CD8-positive, alpha-beta T cell (primary cell): ENCODE measurements at regions of chr19 and their contacts with region 1.

Region 1: GRCh38 chr19:35352448-35353304 is 5.0 kb downstream of the FFAR1 start:
- DNase-seq: peak; percentile 28 to 85 (median 66)
- ATAC-seq: peak; percentile 94
- H3K4me3 ChIP-seq: no peak overlapping the region
- H3K4me3 Mint-ChIP-seq: no peak overlapping the region
- H3K27ac ChIP-seq: no peak overlapping the region
- H3K27ac Mint-ChIP-seq: peak overlapping the region; percentile 22
- H3K4me1 ChIP-seq: peaks cover 13% of the 10 kb centered on the region
- H3K4me1 Mint-ChIP-seq: peaks cover 9% of the 10 kb centered on the region
- H3K27me3 ChIP-seq: no peaks in the 10 kb centered on the region
- H3K27me3 Mint-ChIP-seq: peaks cover 8% of the 10 kb centered on the region
- CTCF ChIP-seq: peak; percentile 90

Region 2: GRCh38 chr19:35375505-35376307 is 23.0 kb after region 1 on chr19:
- CTCF ChIA-PET with region 1: interaction called, 24 read pairs
- POLR2A ChIA-PET with region 1: no interaction called
- intact Hi-C with region 1: no loop called
- DNase-seq: no peak
- ATAC-seq: no peak
- H3K4me3 ChIP-seq: no peak overlapping the region
- H3K4me3 Mint-ChIP-seq: no peak overlapping the region
- H3K27ac ChIP-seq: no peak overlapping the region
- H3K27ac Mint-ChIP-seq: no peak overlapping the region
- H3K4me1 ChIP-seq: no peaks in the 10 kb centered on the region
- H3K4me1 Mint-ChIP-seq: peaks cover 4% of the 10 kb centered on the region
- H3K27me3 ChIP-seq: no peaks in the 10 kb centered on the region
- H3K27me3 Mint-ChIP-seq: peaks cover 5% of the 10 kb centered on the region
- CTCF ChIP-seq: no peak

Region 3: DNA sequence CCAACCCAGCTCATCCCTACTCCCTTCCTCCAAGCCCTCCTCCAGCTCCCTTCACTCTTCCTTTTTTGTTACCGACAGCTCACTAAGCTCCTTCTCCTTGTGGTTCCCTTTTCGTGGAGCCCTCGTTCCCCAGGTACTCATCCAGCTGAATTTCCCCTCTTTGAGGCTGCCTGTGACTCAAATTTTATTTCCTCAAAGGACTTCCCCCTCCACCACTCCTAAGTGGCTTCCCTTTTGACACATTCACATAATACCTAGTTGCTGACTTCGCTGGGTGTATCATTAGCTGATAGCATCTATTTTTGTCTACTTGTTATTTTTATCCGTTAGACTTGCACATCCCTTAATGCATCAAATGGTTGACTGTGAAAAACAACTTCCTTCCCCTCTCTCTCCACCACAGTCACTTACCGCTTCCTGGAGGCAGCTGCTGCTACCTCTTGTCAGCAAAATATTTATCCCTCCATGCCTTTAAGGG is 109.8 kb after region 1 on chr19:
- CTCF ChIA-PET with region 1: interaction called, 104 read pairs
- POLR2A ChIA-PET with region 1: interaction called, 3 read pairs
- intact Hi-C with region 1: no loop called
- DNase-seq: peak; percentile 15 to 92 (median 65)
- ATAC-seq: peak; percentile 91
- H3K4me3 ChIP-seq: peak overlapping the region in 1 of 2 experiments; percentile 6
- H3K4me3 Mint-ChIP-seq: peak overlapping the region; percentile 73
- H3K27ac ChIP-seq: peak overlapping the region; percentile 40 to 91
- H3K27ac Mint-ChIP-seq: peak overlapping the region; percentile 95
- H3K4me1 ChIP-seq: peaks cover 28% of the 10 kb centered on the region
- H3K4me1 Mint-ChIP-seq: peaks cover 30% of the 10 kb centered on the region
- H3K27me3 ChIP-seq: no peaks in the 10 kb centered on the region
- H3K27me3 Mint-ChIP-seq: no peaks in the 10 kb centered on the region
- CTCF ChIP-seq: no peak

Region 4: DNA sequence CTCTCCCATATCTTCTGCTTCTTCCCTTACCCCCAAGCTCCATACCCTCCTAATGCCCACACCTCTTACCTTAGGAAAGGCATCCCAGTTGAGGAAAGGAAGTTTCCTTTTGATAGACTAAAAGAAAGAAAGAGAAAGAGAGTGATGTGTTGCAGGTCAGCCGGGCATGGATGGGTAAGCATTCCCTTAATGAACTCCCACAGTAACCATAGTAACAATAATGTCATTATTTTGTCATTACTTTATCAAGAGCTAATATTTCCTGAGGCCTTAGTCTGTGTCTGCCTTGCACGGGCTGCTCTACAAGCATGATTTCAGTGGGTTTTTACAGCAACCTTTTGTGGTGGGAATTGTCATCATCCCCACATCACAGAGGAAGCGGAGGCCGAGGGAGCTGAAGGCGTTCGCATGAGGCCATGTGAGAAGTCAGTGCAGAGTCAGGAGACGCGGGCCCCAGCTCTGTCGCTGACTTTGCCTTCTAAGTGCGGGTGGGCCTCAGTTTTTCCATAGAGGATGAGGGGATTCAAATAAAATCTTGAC is 135.0 kb after region 1 on chr19:
- CTCF ChIA-PET with region 1: interaction called, 16 read pairs
- POLR2A ChIA-PET with region 1: no interaction called
- intact Hi-C with region 1: no loop called
- DNase-seq: no peak
- ATAC-seq: no peak
- H3K4me3 ChIP-seq: no peak overlapping the region
- H3K4me3 Mint-ChIP-seq: no peak overlapping the region
- H3K27ac ChIP-seq: no peak overlapping the region
- H3K27ac Mint-ChIP-seq: no peak overlapping the region
- H3K4me1 ChIP-seq: no peaks in the 10 kb centered on the region
- H3K4me1 Mint-ChIP-seq: no peaks in the 10 kb centered on the region
- H3K27me3 ChIP-seq: no peaks in the 10 kb centered on the region
- H3K27me3 Mint-ChIP-seq: peaks cover 16% of the 10 kb centered on the region
- CTCF ChIP-seq: no peak

Region 5: GRCh38 chr19:35592226-35592625 is 239.6 kb after region 1 on chr19:
- CTCF ChIA-PET with region 1: interaction called, 4 read pairs
- POLR2A ChIA-PET with region 1: no interaction called
- intact Hi-C with region 1: loop called in 1 of 2 experiments (anchors 2 kb)
- DNase-seq: peak in 2 of 9 experiments; percentile 64 to 71
- ATAC-seq: no peak
- H3K4me3 ChIP-seq: no peak overlapping the region
- H3K4me3 Mint-ChIP-seq: no peak overlapping the region
- H3K27ac ChIP-seq: no peak overlapping the region
- H3K27ac Mint-ChIP-seq: no peak overlapping the region
- H3K4me1 ChIP-seq: no peaks in the 10 kb centered on the region
- H3K4me1 Mint-ChIP-seq: no peaks in the 10 kb centered on the region
- H3K27me3 ChIP-seq: peaks cover 0 to 2% of the 10 kb centered on the region in 2 experiments
- H3K27me3 Mint-ChIP-seq: peaks cover 11% of the 10 kb centered on the region
- CTCF ChIP-seq: peak; percentile 48

Region 6: DNA sequence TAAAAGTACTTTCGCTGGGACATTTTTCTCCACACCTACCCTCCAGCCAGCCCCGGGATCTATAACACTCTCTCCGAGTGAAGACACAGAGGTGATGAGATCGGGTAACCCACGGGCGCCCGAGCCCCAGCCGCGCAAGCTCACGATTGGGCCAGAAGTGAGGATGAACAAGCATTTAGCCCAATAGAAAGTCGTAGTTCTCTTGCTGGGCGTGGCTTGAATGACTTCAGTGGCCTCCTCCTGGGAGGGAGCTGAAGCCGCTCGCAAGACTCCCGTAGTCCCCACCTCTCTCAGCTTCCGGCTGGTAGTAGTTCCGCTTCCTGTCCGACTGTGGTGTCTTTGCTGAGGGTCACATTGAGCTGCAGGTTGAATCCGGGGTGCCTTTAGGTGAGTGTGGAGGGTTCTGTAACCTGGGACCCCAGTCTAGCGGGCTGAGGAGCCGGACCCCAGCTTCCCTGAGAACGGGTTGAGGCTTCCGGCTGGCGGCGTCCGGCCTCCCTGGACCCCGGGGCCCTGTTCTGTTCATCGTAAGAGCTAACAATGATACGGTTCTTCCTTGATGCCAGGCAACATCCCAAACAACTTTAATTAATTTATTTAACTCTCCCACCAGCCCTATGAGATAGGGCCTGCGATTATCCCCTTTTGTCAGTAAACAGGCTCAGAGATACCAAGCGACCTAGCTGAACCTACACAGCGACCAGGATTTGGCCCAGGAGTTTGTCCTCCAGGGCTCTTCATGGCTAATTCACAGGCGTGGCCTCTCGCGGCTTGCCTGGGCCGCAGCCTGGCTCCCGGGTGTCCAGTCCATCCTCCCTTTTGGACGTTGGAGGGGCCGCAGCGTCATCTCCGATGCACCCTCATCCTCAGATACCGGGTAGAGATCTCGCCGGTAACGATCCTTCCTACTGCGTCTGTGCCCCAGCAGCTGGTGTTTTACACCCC is 295.6 kb after region 1 on chr19 and contains the start of gene COX6B1:
- CTCF ChIA-PET with region 1: no interaction called
- POLR2A ChIA-PET with region 1: no interaction called
- intact Hi-C with region 1: no loop called
- DNase-seq: peak; percentile 83 to 98 (median 90)
- ATAC-seq: peak; percentile 72
- H3K4me3 ChIP-seq: peak within 1 kb of the TSS; percentile 70 to 82
- H3K4me3 Mint-ChIP-seq: peak within 1 kb of the TSS; percentile 99
- H3K27ac ChIP-seq: peak within 1 kb of the TSS; percentile 66 to 80
- H3K27ac Mint-ChIP-seq: peak within 1 kb of the TSS; percentile 97
- H3K4me1 ChIP-seq: peaks cover 32% of the 10 kb centered on the region
- H3K4me1 Mint-ChIP-seq: peaks cover 52% of the 10 kb centered on the region
- H3K27me3 ChIP-seq: no peaks in the 10 kb centered on the region
- H3K27me3 Mint-ChIP-seq: no peaks in the 10 kb centered on the region
- CTCF ChIP-seq: no peak
- total RNA-seq, gene COX6B1: 152 to 171 TPM